ENCODE measurements at regions of chr9 and their contacts with region 1.

Region 1: DNA sequence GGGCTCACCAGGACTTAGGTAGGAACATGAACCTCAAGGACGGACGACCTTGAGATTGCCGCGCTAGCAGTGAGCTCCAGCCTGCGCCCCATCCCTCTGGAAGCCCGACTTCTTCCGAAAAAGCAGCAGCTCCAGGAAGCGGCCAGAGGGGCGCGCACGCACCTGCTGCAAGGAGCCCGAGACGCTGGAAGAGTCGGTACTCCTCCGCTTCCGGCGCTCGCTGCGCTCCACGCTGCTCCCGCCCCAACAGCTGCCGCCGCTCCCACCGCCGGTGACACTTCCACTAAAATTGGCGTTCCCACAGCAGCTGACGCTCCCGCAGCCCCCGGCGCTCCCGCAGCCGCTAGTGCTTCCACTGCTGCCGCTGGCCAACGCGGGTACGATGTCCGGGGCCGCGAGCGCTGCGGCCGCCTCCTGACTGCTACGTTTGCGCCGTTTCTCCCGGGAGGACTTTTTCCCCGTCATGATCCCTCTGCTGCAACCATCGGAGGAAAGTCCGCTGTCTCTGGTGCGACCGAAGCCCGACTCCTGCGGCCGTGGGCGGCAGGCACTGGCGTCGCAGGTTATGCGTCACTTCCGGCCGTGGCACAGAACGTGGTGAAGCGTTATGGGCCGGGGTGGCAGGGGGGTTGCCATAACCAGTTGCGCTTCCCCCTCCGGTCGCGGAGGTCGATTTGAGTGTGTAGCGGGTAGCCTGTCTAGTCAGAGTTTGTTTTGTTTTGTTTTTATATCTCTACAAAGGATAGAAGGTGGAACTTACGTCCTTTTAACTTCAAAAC is at the start of gene CAAP1:
- DNase-seq: peak; percentile 78 to 93 (median 88)
- ATAC-seq: peak; percentile 96
- H3K4me3 ChIP-seq: peak within 1 kb of the TSS; percentile 100
- H3K4me3 Mint-ChIP-seq: peak within 1 kb of the TSS; percentile 95 to 100 (median 99)
- H3K27ac ChIP-seq: peak within 1 kb of the TSS; percentile 88
- H3K27ac Mint-ChIP-seq: peak within 1 kb of the TSS; percentile 98 to 100 (median 99)
- H3K4me1 ChIP-seq: peaks cover 11 to 15% of the 10 kb centered on the region in 2 donors
- H3K4me1 Mint-ChIP-seq: peaks cover 26 to 53% (median 36%) of the 10 kb centered on the region in 7 donors
- H3K27me3 ChIP-seq: no peaks in the 10 kb centered on the region
- H3K27me3 Mint-ChIP-seq: no peaks in the 10 kb centered on the region
- total RNA-seq, gene CAAP1: 11.8 to 19.6 (median 17.8) TPM

Region 2: DNA sequence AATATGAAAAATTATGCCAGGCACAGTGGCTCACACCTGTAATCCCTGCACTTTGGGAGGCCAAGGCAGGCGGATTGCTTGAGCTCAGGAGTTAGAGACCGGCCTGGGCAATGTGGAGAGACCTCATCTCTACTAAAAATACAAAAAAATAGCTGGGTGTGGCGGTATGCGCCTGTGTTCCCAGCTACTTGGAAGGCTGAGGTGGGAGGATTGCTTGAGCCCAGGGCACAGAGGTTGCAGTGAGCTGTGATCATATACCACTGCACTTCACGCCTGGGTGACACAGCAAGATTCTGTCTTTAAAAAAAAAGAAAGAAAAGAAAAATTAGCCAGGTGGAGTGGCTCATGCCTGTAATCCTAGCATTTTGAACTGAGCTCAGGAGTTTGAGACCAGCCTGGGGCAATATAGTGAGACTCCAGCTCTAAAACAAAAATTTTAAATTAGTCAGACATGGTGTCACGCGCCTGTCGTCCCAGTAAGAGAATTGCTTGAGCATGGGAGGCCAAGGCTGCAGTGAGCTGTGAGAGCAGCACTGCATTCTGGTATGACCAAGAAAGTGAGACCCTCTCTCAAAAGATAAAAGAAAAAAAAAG is 36.6 kb after region 1 on chr9:
- CTCF ChIA-PET with region 1: no interaction called
- POLR2A ChIA-PET with region 1: no interaction called
- intact Hi-C with region 1: loop called in 1 of 2 experiments (anchors 5 kb)
- DNase-seq: no peak
- ATAC-seq: no peak
- H3K4me3 ChIP-seq: no peak overlapping the region
- H3K4me3 Mint-ChIP-seq: no peak overlapping the region
- H3K27ac ChIP-seq: no peak overlapping the region
- H3K27ac Mint-ChIP-seq: no peak overlapping the region
- H3K4me1 ChIP-seq: no peaks in the 10 kb centered on the region
- H3K4me1 Mint-ChIP-seq: peaks cover 0 to 7% (median 0%) of the 10 kb centered on the region in 7 donors
- H3K27me3 ChIP-seq: no peaks in the 10 kb centered on the region
- H3K27me3 Mint-ChIP-seq: no peaks in the 10 kb centered on the region

Region 3: GRCh38 chr9:26946753-26947727 is 54.6 kb after region 1 on chr9 and contains the start of gene PLAA:
- CTCF ChIA-PET with region 1: interaction called, 3 read pairs
- POLR2A ChIA-PET with region 1: interaction called, 10 read pairs
- intact Hi-C with region 1: loop called (anchors 1 kb)
- DNase-seq: peak; percentile 81 to 92 (median 88)
- ATAC-seq: peak; percentile 97
- H3K4me3 ChIP-seq: peak within 1 kb of the TSS; percentile 100
- H3K4me3 Mint-ChIP-seq: peak within 1 kb of the TSS; percentile 91 to 99 (median 95)
- H3K27ac ChIP-seq: peak within 1 kb of the TSS; percentile 99
- H3K27ac Mint-ChIP-seq: peak within 1 kb of the TSS; percentile 97 to 100 (median 99)
- H3K4me1 ChIP-seq: peaks cover 22 to 28% of the 10 kb centered on the region in 2 donors
- H3K4me1 Mint-ChIP-seq: peaks cover 33 to 54% (median 50%) of the 10 kb centered on the region in 7 donors
- H3K27me3 ChIP-seq: no peaks in the 10 kb centered on the region
- H3K27me3 Mint-ChIP-seq: peaks cover 0 to 11% (median 0%) of the 10 kb centered on the region in 5 donors
- total RNA-seq, gene PLAA: 22.4 to 33.6 (median 24.7) TPM

Region 4: GRCh38 chr9:26955921-26956859 is 63.8 kb after region 1 on chr9 and contains the start of gene IFT74:
- CTCF ChIA-PET with region 1: no interaction called
- POLR2A ChIA-PET with region 1: interaction called, 10 read pairs
- intact Hi-C with region 1: loop called (anchors 1 kb)
- DNase-seq: peak; percentile 84 to 97 (median 93)
- ATAC-seq: peak; percentile 100
- H3K4me3 ChIP-seq: peak within 1 kb of the TSS; percentile 76
- H3K4me3 Mint-ChIP-seq: peak within 1 kb of the TSS; percentile 80 to 99 (median 95)
- H3K27ac ChIP-seq: peak within 1 kb of the TSS; percentile 82
- H3K27ac Mint-ChIP-seq: peak within 1 kb of the TSS; percentile 91 to 98 (median 96)
- H3K4me1 ChIP-seq: peaks cover 0 to 3% of the 10 kb centered on the region in 2 donors
- H3K4me1 Mint-ChIP-seq: peaks cover 13 to 47% (median 38%) of the 10 kb centered on the region in 7 donors
- H3K27me3 ChIP-seq: no peaks in the 10 kb centered on the region
- H3K27me3 Mint-ChIP-seq: no peaks in the 10 kb centered on the region
- total RNA-seq, gene IFT74: 8.0 to 11.6 (median 9.7) TPM

Region 5: DNA sequence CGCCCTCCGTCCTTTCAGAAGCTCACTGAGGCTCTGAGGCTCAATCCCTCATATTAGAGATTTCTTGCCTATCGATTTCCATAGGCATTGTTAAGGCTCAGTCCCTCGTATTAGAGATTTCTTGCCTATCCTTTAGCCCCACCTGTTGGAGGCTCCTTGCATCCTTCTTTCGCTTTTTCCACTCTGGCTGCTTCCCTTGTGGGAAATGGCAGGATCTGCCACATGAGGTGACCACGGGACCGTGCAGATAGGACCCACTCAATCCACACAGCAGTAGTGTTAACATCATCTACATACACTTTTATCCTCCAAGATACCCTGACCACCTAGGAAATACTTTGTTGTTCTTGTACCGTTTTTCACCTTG is 83.2 kb after region 1 on chr9:
- CTCF ChIA-PET with region 1: no interaction called
- POLR2A ChIA-PET with region 1: no interaction called
- intact Hi-C with region 1: loop called (anchors 1 kb)
- DNase-seq: peak in 2 of 9 donors; percentile 11 to 13
- ATAC-seq: no peak
- H3K4me3 ChIP-seq: no peak overlapping the region
- H3K4me3 Mint-ChIP-seq: no peak overlapping the region
- H3K27ac ChIP-seq: no peak overlapping the region
- H3K27ac Mint-ChIP-seq: peak overlapping the region in 2 of 9 donors; percentile 42 to 47
- H3K4me1 ChIP-seq: no peaks in the 10 kb centered on the region
- H3K4me1 Mint-ChIP-seq: peaks cover 0 to 5% (median 0%) of the 10 kb centered on the region in 7 donors
- H3K27me3 ChIP-seq: no peaks in the 10 kb centered on the region
- H3K27me3 Mint-ChIP-seq: no peaks in the 10 kb centered on the region

Region 6: GRCh38 chr9:27086818-27087680 is 194.6 kb after region 1 on chr9:
- CTCF ChIA-PET with region 1: no interaction called
- POLR2A ChIA-PET with region 1: no interaction called
- intact Hi-C with region 1: no loop called
- DNase-seq: no peak
- ATAC-seq: no peak
- H3K4me3 ChIP-seq: no peak overlapping the region
- H3K4me3 Mint-ChIP-seq: no peak overlapping the region
- H3K27ac ChIP-seq: no peak overlapping the region
- H3K27ac Mint-ChIP-seq: no peak overlapping the region
- H3K4me1 ChIP-seq: no peaks in the 10 kb centered on the region
- H3K4me1 Mint-ChIP-seq: no peaks in the 10 kb centered on the region
- H3K27me3 ChIP-seq: no peaks in the 10 kb centered on the region
- H3K27me3 Mint-ChIP-seq: peaks cover 0 to 2% (median 0%) of the 10 kb centered on the region in 5 donors

Measured in naive thymus-derived CD4-positive, alpha-beta T cell (primary cell).